MCF 10A (cell line): ENCODE measurements at regions of chr15 and their contacts with region 1.

Region 1: GRCh38 chr15:83446904-83447709 is at the start of gene SH3GL3:
- DNase-seq: peak; percentile 82
- H3K4me3 Mint-ChIP-seq: peak within 1 kb of the TSS; percentile 91
- H3K27ac Mint-ChIP-seq: peak within 1 kb of the TSS; percentile 68
- H3K4me1 Mint-ChIP-seq: peaks cover 11% of the 10 kb centered on the region
- H3K27me3 Mint-ChIP-seq: peaks cover 16% of the 10 kb centered on the region
- CTCF ChIP-seq: peak; percentile 51
- total RNA-seq, gene SH3GL3: 0.19 TPM in 1 of 2 replicates, not detected in the other

Region 2: DNA sequence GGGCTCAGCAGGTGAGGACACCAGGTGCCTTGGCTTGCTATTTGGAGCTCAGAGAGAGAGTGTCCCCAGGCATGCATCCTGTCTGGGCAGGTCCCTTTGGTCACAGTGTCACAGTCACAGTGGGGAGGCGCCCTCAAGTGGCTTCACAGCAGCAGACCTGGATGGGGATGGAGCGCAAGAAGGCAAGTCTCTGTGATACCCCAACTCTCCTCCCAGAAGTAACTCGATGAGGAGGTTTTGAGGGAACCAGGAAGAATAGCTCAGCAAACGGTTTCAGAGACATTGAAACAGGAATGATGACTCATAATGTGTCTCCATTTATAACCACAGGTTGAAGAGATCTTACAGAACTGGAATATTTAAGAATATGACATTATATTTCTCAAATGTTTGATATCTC is 66.4 kb before region 1 on chr15:
- CTCF ChIA-PET with region 1: no interaction called
- POLR2A ChIA-PET with region 1: no interaction called
- intact Hi-C with region 1: no loop called
- DNase-seq: peak; percentile 79
- H3K4me3 Mint-ChIP-seq: peak overlapping the region; percentile 17
- H3K27ac Mint-ChIP-seq: peak overlapping the region; percentile 87
- H3K4me1 Mint-ChIP-seq: peaks cover 37% of the 10 kb centered on the region
- H3K27me3 Mint-ChIP-seq: no peaks in the 10 kb centered on the region
- CTCF ChIP-seq: peak; percentile 26

Region 3: GRCh38 chr15:83475551-83475950 is 28.4 kb after region 1 on chr15:
- CTCF ChIA-PET with region 1: no interaction called
- POLR2A ChIA-PET with region 1: no interaction called
- intact Hi-C with region 1: no loop called
- DNase-seq: peak; percentile 14
- H3K4me3 Mint-ChIP-seq: no peak overlapping the region
- H3K27ac Mint-ChIP-seq: no peak overlapping the region
- H3K4me1 Mint-ChIP-seq: no peaks in the 10 kb centered on the region
- H3K27me3 Mint-ChIP-seq: no peaks in the 10 kb centered on the region
- CTCF ChIP-seq: no peak

Region 4: DNA sequence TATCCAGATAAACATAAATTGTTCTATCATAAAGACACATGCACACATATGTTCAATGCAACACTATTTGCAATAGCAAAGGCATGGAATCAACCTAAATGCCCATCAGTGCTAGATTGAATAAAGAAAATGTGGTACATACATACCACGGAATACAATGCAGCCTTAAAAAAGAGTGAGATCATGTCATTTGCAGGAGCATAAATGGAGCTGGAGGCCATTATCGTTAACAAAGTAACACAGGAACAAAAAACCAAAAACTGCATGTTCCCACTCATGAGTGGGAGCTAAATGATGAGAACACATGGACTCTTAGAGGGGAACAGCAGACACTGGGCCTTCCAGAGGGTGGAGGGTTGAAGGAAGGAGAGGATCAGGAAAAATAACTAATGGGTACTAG is 79.2 kb after region 1 on chr15:
- CTCF ChIA-PET with region 1: no interaction called
- POLR2A ChIA-PET with region 1: no interaction called
- intact Hi-C with region 1: no loop called
- DNase-seq: no peak
- H3K4me3 Mint-ChIP-seq: no peak overlapping the region
- H3K27ac Mint-ChIP-seq: no peak overlapping the region
- H3K4me1 Mint-ChIP-seq: no peaks in the 10 kb centered on the region
- H3K27me3 Mint-ChIP-seq: peaks cover 47% of the 10 kb centered on the region
- CTCF ChIP-seq: no peak

Region 5: GRCh38 chr15:83549623-83550022 is 102.5 kb after region 1 on chr15:
- CTCF ChIA-PET with region 1: interaction called, 12 read pairs
- POLR2A ChIA-PET with region 1: interaction called, 3 read pairs
- intact Hi-C with region 1: no loop called
- DNase-seq: no peak
- H3K4me3 Mint-ChIP-seq: no peak overlapping the region
- H3K27ac Mint-ChIP-seq: no peak overlapping the region
- H3K4me1 Mint-ChIP-seq: no peaks in the 10 kb centered on the region
- H3K27me3 Mint-ChIP-seq: peaks cover under 1% of the 10 kb centered on the region
- CTCF ChIP-seq: no peak

Region 6: DNA sequence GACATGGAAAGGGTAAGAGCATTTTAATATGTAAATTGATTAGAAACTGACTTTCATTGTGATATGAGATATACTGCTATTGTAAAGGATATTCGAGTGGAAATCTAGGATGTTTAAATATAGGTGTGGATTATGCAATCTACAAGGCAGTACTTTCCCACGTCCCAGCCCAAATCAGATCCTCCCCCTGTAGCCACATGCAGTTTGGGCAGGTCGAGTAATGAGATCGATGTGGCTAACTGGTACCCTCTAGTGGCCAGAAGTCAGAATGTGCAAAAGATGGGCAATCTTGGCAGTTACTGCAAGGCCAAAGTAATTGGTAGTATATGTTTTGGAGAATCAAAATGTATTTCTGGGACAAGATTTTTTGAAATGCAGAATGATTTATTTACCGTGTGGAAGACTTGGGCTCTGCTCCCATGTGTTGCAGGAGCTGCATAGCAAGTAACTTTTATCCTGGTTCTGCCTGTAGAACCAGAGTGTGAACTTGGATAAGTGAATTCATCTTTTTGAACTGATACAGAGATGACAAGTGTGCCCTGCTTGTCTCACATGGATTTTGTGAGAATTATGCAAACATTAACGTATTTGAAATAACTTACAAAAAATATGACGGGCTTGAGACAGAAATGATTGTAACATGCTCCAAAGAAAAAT is 112.3 kb after region 1 on chr15:
- CTCF ChIA-PET with region 1: interaction called, 158 read pairs
- POLR2A ChIA-PET with region 1: interaction called, 5 read pairs
- intact Hi-C with region 1: loop called (anchors 1 kb)
- DNase-seq: peak; percentile 88
- H3K4me3 Mint-ChIP-seq: no peak overlapping the region
- H3K27ac Mint-ChIP-seq: no peak overlapping the region
- H3K4me1 Mint-ChIP-seq: peaks cover 6% of the 10 kb centered on the region
- H3K27me3 Mint-ChIP-seq: no peaks in the 10 kb centered on the region
- CTCF ChIP-seq: peak; percentile 79